ENCODE measurements at regions of chr3 and their contacts with region 1.

Region 1: DNA sequence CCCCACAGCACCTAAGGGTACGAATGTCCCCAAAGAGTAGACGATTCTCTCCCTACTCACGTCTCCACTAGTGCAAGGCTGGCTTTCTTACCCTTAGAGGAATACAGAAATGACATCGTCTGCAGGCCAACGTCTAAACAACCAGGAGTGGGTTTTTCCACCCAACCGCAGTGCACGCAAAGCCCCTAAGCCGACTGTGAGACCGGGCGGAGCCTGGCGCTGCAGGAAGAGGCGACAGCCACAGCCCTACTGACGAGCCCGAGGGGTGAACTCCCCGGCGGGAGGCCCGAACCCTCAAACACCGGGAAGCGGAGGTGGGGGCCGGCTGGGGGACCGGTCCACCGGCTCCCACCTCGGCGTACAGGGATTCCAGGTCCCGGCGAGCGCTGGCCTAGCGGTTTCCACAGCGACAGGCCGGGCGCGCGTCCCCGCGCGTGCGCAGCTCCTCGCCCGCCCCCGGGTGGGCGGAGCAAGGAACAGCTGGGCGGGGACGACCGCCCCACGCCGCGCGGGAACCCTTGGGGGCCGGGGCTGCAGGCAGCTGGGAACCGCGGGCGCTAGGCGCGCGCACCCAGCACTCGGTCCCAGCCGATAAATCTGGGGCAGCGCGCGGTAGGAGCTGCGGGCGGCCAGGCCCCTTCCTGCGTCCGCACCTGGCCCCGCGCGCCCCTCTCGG is at the starts of genes CEP19 and PIGX:
- DNase-seq: peak; percentile 94
- ATAC-seq: peak; percentile 87
- H3K4me3 Mint-ChIP-seq: peak within 1 kb of the TSS; percentile 83
- H3K27ac Mint-ChIP-seq: peak within 1 kb of the TSS; percentile 96
- H3K4me1 Mint-ChIP-seq: peaks cover 33% of the 10 kb centered on the region
- H3K27me3 Mint-ChIP-seq: no peaks in the 10 kb centered on the region
- total RNA-seq, gene CEP19: 4.7 to 5.6 TPM
- total RNA-seq, gene PIGX: 37.8 to 42.2 TPM

Region 2: GRCh38 chr3:196528639-196529233 is 183.2 kb before region 1 on chr3:
- CTCF ChIA-PET with region 1: interaction called, 3 read pairs
- POLR2A ChIA-PET with region 1: no interaction called
- intact Hi-C with region 1: loop called in 1 of 2 experiments (anchors 1 kb)
- DNase-seq: peak; percentile 93
- ATAC-seq: peak; percentile 94
- H3K4me3 Mint-ChIP-seq: peak overlapping the region; percentile 74
- H3K27ac Mint-ChIP-seq: peak overlapping the region; percentile 72
- H3K4me1 Mint-ChIP-seq: peaks cover 8% of the 10 kb centered on the region
- H3K27me3 Mint-ChIP-seq: peaks cover 2% of the 10 kb centered on the region

Region 3: DNA sequence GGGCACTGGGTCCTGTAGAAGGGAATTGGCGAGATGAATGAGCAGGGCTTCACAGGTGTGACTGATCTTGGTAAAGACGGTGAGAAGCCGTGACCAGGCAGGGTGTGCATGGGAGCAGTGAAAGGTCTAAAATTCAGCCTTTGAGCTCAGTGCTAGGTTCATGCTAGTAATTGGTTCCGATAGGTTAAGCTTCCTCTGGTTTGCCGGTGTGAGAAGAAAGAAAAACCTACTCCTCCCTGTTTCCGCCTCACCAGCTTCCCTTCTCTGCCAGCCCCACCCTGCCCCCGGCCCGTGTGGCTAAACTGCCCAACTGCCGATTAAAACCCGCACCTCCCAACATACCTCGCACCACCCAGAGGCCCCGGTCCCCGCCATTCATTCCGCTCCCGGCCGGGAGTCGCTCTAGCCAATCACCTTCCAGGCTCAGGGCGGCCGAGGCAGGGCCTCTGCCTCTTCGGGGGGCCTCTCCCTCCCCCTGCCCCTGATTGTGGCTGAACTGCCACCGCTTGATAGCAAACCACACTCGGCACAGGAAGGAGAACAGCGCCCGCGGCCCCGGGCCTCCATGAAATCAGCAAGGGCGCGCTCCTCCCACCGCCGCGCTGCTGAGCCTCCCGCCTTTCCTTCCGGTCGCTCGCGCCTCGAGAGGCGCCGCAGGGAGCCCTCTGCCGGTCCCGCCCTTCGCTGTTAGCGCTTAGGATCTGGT is 79.8 kb before region 1 on chr3:
- CTCF ChIA-PET with region 1: no interaction called
- POLR2A ChIA-PET with region 1: interaction called, 3 read pairs
- intact Hi-C with region 1: loop called (anchors 2 kb)
- DNase-seq: peak; percentile 93
- ATAC-seq: peak; percentile 80
- H3K4me3 Mint-ChIP-seq: peak overlapping the region; percentile 81
- H3K27ac Mint-ChIP-seq: peak overlapping the region; percentile 95
- H3K4me1 Mint-ChIP-seq: peaks cover 55% of the 10 kb centered on the region
- H3K27me3 Mint-ChIP-seq: no peaks in the 10 kb centered on the region

Region 4: GRCh38 chr3:196726788-196727675 is 15.1 kb after region 1 on chr3:
- CTCF ChIA-PET with region 1: interaction called, 3 read pairs
- POLR2A ChIA-PET with region 1: no interaction called
- intact Hi-C with region 1: loop called in 1 of 2 experiments (anchors 1 kb)
- DNase-seq: peak; percentile 54
- ATAC-seq: peak; percentile 98
- H3K4me3 Mint-ChIP-seq: no peak overlapping the region
- H3K27ac Mint-ChIP-seq: peak overlapping the region; percentile 21
- H3K4me1 Mint-ChIP-seq: peaks cover 16% of the 10 kb centered on the region
- H3K27me3 Mint-ChIP-seq: no peaks in the 10 kb centered on the region

Region 5: GRCh38 chr3:196803891-196804468 is 92.0 kb after region 1 on chr3:
- CTCF ChIA-PET with region 1: no interaction called
- POLR2A ChIA-PET with region 1: no interaction called
- intact Hi-C with region 1: loop called in 1 of 2 experiments (anchors 5 kb)
- DNase-seq: no peak
- ATAC-seq: peak; percentile 80
- H3K4me3 Mint-ChIP-seq: peak overlapping the region; percentile 8
- H3K27ac Mint-ChIP-seq: peak overlapping the region; percentile 86
- H3K4me1 Mint-ChIP-seq: peaks cover 20% of the 10 kb centered on the region
- H3K27me3 Mint-ChIP-seq: no peaks in the 10 kb centered on the region

Region 6: GRCh38 chr3:196969660-196970546 is 257.9 kb after region 1 on chr3:
- CTCF ChIA-PET with region 1: no interaction called
- POLR2A ChIA-PET with region 1: no interaction called
- intact Hi-C with region 1: loop called in 1 of 2 experiments (anchors 1 kb)
- DNase-seq: peak; percentile 80
- ATAC-seq: peak; percentile 65
- H3K4me3 Mint-ChIP-seq: peak overlapping the region; percentile 63
- H3K27ac Mint-ChIP-seq: peak overlapping the region; percentile 31
- H3K4me1 Mint-ChIP-seq: peaks cover 15% of the 10 kb centered on the region
- H3K27me3 Mint-ChIP-seq: peaks cover 11% of the 10 kb centered on the region

Measured in activated CD4-positive, alpha-beta T cell treated with anti-CD3 and anti-CD28 coated beads for 36 hours (primary cell).